ENCODE measurements at regions of chr1 and their contacts with region 1.

Region 1: GRCh38 chr1:18597160-18598042 is 33.2 kb upstream of the PAX7 start:
- DNase-seq: peak; percentile 67 to 81
- H3K4me3 ChIP-seq: no peak overlapping the region
- H3K27ac ChIP-seq: no peak overlapping the region
- H3K4me1 ChIP-seq: peaks cover 0 to 13% (median 0%) of the 10 kb centered on the region in 4 donors
- H3K27me3 ChIP-seq: peaks cover 0 to 91% (median 28%) of the 10 kb centered on the region in 3 donors
- CTCF ChIP-seq: peak in 5 of 7 experiments; percentile 78 to 88 (median 85)
- EP300 ChIP-seq: no peak
- POLR2A ChIP-seq: no peak

Region 2: GRCh38 chr1:18322368-18323032 is 274.9 kb before region 1 on chr1:
- intact Hi-C with region 1: no loop called
- DNase-seq: no peak
- H3K4me3 ChIP-seq: no peak overlapping the region
- H3K27ac ChIP-seq: no peak overlapping the region
- H3K4me1 ChIP-seq: peaks cover 0 to 27% (median 24%) of the 10 kb centered on the region in 4 donors
- H3K27me3 ChIP-seq: peaks cover 0 to 7% (median 0%) of the 10 kb centered on the region in 3 donors
- CTCF ChIP-seq: peak in 2 of 7 experiments; percentile 11 to 16
- EP300 ChIP-seq: no peak
- POLR2A ChIP-seq: no peak

Region 3: DNA sequence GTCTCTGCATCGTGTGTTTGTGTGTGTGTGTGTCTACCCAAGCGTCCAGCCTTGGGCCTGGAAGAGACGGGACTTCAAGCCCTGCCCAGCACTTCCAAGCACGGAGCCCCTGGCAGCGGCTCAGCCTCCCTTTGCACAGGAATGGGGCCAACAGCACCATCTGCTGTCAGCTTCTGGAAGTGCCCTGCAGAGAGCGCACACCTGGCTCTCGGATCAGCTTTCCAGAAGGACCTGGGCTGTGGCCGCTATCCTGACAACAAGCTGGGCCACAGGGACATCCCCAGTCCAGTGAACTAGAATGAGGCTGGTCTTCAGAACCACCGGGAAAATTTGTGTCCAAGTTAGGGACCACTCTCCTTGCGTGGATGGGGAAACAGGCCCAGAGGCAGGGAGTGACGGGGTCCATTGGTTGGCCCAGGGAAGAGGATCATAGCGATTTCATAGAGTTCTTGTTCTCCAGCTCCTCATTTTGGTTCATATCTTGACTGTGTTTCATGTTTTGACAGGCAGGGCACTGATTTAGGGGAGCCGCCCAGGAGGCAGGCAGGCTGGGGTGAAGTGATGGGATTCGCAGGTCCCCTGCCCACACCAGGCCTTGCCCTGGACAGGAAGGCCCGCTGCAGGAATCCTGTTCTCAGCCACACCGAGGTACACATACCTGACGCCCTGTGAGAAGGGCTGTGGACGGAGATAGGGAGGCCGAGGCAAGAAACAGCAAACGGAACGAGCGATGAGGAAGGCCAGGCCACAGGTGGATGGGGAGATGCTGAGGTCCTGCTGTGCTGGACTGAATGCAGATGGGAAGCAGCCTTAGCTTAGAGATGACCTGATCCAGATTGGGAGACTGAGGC is 223.6 kb after region 1 on chr1:
- intact Hi-C with region 1: loop called (anchors 5 kb)
- DNase-seq: peak; percentile 82 to 91
- H3K4me3 ChIP-seq: no peak overlapping the region
- H3K27ac ChIP-seq: no peak overlapping the region
- H3K4me1 ChIP-seq: peaks cover 0 to 6% (median 0%) of the 10 kb centered on the region in 4 donors
- H3K27me3 ChIP-seq: peaks cover 0 to 61% (median 33%) of the 10 kb centered on the region in 3 donors
- CTCF ChIP-seq: peak in 5 of 7 experiments; percentile 65 to 87 (median 78)
- EP300 ChIP-seq: no peak
- POLR2A ChIP-seq: no peak